Heart right ventricle (tissue), 16 donors: ENCODE measurements at regions of chr17 and their contacts with region 1.

Region 1: GRCh38 chr17:8581002-8581658 is 49.4 kb downstream of the MYH10 start:
- DNase-seq: no peak
- ATAC-seq: no peak
- H3K4me3 ChIP-seq: no peak overlapping the region
- H3K27ac ChIP-seq: no peak overlapping the region
- H3K4me1 ChIP-seq: peaks cover 0 to 20% (median 4%) of the 10 kb centered on the region in 9 donors
- H3K27me3 ChIP-seq: no peaks in the 10 kb centered on the region
- CTCF ChIP-seq: no peak

Region 2: DNA sequence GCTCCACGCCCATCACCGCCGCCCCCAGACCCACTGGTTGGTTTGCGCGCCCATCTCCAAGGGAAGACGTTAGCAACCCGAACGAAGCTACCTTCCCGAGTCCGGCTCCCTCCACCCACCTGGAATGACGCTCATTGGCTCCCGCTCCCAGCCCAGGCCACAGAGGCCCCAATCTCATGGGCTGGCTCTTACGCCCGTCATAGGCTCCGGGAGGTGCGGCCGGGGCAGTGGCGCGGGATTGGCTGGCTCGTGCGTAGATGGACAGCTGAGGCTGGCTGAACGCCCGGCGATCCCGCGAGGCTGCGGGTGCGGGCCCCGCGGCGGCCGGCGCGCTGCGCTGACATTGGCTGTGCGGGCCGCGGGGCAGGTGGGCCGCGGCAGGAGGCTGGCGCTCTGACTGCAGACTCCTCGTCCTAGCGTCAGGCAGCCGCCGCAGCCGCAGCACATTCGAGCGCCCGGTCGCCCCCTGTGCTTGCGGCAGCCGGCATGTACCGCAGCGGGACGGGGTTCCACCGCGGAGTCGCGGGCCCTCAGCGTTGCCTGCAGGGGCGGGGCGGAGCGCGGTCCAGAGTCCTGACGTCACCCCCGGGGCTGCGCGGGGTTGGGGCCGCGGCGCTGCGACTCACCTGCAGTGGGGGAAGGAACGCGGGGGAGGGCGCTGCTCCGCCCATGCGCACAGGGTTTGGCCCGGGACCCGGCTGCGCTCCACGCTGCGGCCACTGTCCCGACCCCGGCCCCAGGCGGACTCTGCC is 49.8 kb after region 1 on chr17:
- intact Hi-C with region 1: loop called in 1 of 10 experiments (anchors 5 kb)
- DNase-seq: peak; percentile 97 to 99
- ATAC-seq: peak; percentile 96 to 99 (median 98)
- H3K4me3 ChIP-seq: peak overlapping the region; percentile 75 to 98 (median 90)
- H3K27ac ChIP-seq: peak overlapping the region; percentile 79 to 94 (median 86)
- H3K4me1 ChIP-seq: peaks cover 5 to 48% (median 25%) of the 10 kb centered on the region in 9 donors
- H3K27me3 ChIP-seq: peaks cover 0 to 80% (median 0%) of the 10 kb centered on the region in 7 donors
- CTCF ChIP-seq: peak in 8 of 9 donors; percentile 5 to 42 (median 16)